AG04450 (cell line): ENCODE measurements at regions of chr2 and their contacts with region 1.

Region 1: GRCh38 chr2:75560768-75561565 is at the start of gene EVA1A:
- DNase-seq: peak; percentile 61
- H3K4me3 ChIP-seq: peak within 1 kb of the TSS; percentile 86
- H3K27ac ChIP-seq: peak within 1 kb of the TSS; percentile 97
- H3K27me3 ChIP-seq: no peaks in the 10 kb centered on the region
- CTCF ChIP-seq: no peak
- polyA plus RNA-seq, gene EVA1A: 22.8 and 32.5 TPM in 2 replicates

Region 2: DNA sequence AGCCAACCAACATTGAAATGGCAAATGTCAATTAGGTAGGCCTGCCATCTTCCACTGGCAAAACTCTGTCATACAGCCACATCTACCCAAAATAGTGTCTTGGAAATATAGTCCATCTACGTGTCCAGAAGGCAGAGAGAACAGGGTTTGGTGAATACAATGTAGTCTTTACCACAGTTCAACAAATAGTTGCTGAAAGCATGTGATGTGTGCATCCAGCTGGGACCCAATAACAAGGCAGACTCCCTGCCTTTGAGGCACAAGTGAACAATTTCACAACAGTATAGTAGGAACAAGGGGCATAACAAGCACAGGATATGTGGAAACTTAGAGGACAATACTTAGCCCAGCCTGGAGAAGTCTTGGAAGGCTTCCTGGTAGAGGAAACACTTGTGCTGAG is 72.8 kb before region 1 on chr2:
- CTCF ChIA-PET with region 1: no interaction called
- POLR2A ChIA-PET with region 1: no interaction called
- DNase-seq: no peak
- H3K4me3 ChIP-seq: no peak overlapping the region
- H3K27ac ChIP-seq: no peak overlapping the region
- H3K27me3 ChIP-seq: no peaks in the 10 kb centered on the region
- CTCF ChIP-seq: no peak

Region 3: GRCh38 chr2:75587954-75588587 is 27.1 kb after region 1 on chr2:
- CTCF ChIA-PET with region 1: interaction called, 5 read pairs
- POLR2A ChIA-PET with region 1: interaction called, 13 read pairs
- DNase-seq: peak; percentile 69
- H3K4me3 ChIP-seq: peak overlapping the region; percentile 35
- H3K27ac ChIP-seq: peak overlapping the region; percentile 54
- H3K27me3 ChIP-seq: no peaks in the 10 kb centered on the region
- CTCF ChIP-seq: no peak

Region 4: DNA sequence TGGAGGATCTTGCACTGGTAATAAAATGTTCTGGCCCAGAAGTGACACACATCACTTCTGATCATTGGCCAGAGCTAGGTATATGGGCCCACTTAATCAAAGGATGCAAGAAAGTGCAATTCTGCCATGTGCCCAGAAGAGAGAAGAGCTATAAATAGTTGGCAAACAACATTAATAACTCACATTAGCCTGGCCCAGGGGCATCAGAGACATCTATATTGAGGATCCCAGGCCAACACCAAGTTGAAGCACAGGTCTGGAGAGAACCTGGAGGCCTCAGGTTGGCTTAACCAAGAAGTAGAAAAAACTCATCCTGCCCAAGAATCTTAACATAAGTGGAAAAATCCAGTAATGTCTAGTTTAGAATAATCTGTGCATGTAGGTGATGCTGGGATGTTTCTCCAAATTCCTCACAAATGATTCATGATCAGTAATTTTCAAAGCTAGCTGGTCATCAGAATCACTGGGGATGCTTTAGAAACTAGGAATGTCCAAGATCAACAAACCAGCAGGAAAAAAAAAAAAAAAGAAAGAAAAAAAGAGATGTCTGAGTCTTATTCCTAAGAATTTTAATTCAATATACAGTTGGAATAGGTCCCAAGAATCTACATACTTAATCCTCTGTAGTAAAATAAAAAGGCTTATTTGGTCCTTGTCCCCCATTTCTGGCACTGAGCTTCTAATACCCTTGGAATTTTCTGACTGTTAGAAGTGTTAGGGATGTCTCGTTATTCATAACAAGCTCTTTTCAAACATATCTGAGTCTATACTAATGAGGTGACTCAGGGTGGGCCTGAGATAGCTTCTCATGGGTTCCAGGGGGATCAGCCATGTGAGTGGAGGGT is 34.8 kb after region 1 on chr2:
- CTCF ChIA-PET with region 1: interaction called, 5 read pairs
- POLR2A ChIA-PET with region 1: interaction called, 14 read pairs
- DNase-seq: peak; percentile 78
- H3K4me3 ChIP-seq: no peak overlapping the region
- H3K27ac ChIP-seq: peak overlapping the region; percentile 87
- H3K27me3 ChIP-seq: no peaks in the 10 kb centered on the region
- CTCF ChIP-seq: no peak